Tibial artery (tissue), 4 donors: ENCODE measurements at regions of chr1 and their contacts with region 1.

Region 1: DNA sequence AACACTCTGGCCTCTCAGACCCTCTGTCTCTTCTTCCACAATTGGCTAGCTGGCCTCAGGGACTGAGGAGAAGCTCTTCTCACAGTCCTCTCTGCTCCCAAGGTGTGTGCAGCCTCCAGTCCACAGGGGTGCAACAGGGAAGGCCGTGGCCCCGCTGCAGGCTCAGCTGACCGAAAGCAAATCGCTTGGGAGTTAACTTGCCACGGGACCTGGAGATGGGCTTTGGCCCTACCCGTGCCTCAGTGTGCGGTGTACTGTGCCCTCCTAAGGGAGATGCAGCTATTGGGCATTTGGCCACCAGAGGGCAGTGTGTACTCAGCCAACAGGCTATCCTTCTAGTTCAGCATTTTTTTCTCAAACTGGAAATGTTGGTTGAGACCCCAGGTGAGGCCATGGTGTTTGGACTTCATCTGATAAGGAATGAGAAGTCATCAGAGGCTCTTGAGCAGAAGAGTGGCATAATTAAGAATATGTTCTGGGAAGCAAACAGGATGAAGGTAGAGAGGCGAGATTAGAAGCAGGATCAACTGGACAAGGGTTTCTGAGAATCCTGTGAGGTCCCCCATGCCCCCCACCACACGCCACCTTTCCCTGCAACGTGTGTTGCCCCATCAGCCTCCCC is 42.5 kb upstream of the TMEM125 start:
- DNase-seq: peak; percentile 83 to 88
- H3K4me3 ChIP-seq: no peak overlapping the region
- H3K27ac ChIP-seq: no peak overlapping the region
- H3K4me1 ChIP-seq: peaks cover 0 to 5% (median 2%) of the 10 kb centered on the region in 4 donors
- H3K27me3 ChIP-seq: no peaks in the 10 kb centered on the region
- CTCF ChIP-seq: peak; percentile 89 to 91

Region 2: DNA sequence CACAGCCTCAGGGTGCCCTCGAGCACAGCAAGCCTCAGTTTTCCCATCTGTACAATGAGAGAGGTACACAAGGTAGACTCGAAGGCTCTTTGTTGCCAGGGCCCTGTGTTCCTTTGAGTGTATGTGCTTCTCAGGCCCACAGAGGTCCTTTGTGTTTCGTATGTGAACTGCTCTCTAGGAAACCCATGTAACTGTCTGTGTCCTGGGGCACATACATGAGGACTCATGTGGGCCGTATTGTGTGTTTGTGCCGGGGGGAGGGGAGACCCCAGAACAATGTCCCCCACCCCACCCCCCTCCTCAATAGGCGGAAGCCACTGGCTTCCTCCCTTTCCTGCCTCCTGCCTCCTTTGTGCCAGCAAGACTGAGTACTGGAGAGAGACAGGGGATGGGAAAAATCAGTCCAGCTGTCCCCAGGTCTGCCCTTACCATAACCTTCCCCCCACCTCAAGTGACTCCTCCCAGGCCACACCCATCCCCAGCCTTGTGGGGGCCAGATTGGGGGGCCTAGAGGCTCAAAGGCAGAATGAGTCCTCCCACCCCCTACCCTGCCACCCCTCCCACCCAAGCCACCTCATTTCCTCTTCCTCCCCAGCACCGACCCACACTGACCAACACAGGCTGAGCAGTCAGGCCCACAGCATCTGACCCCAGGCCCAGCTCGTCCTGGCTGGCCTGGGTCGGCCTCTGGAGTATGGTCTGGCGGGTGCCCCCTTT is 73.3 kb after region 1 on chr1 and contains the start of gene TIE1:
- intact Hi-C with region 1: no loop called
- DNase-seq: no peak
- H3K4me3 ChIP-seq: peak within 1 kb of the TSS; percentile 18 to 25
- H3K27ac ChIP-seq: no peak within 1 kb of the TSS
- H3K4me1 ChIP-seq: peaks cover 0 to 21% (median 6%) of the 10 kb centered on the region in 4 donors
- H3K27me3 ChIP-seq: no peaks in the 10 kb centered on the region
- CTCF ChIP-seq: no peak

Region 3: GRCh38 chr1:43389326-43390313 is 162.4 kb after region 1 on chr1 and contains the starts of genes MED8 and SZT2:
- intact Hi-C with region 1: loop called (anchors 10 kb)
- DNase-seq: peak; percentile 97 to 98
- H3K4me3 ChIP-seq: peak within 1 kb of the TSS; percentile 76 to 78
- H3K27ac ChIP-seq: peak within 1 kb of the TSS; percentile 87
- H3K4me1 ChIP-seq: peaks cover 0 to 33% (median 26%) of the 10 kb centered on the region in 4 donors
- H3K27me3 ChIP-seq: no peaks in the 10 kb centered on the region
- CTCF ChIP-seq: no peak

Region 4: GRCh38 chr1:43415901-43416300 is 188.6 kb after region 1 on chr1:
- intact Hi-C with region 1: loop called (anchors 2 kb)
- DNase-seq: no peak
- H3K4me3 ChIP-seq: no peak overlapping the region
- H3K27ac ChIP-seq: no peak overlapping the region
- H3K4me1 ChIP-seq: no peaks in the 10 kb centered on the region
- H3K27me3 ChIP-seq: no peaks in the 10 kb centered on the region
- CTCF ChIP-seq: no peak